ENCODE measurements at regions of chr4 and their contacts with region 1.

Region 1: DNA sequence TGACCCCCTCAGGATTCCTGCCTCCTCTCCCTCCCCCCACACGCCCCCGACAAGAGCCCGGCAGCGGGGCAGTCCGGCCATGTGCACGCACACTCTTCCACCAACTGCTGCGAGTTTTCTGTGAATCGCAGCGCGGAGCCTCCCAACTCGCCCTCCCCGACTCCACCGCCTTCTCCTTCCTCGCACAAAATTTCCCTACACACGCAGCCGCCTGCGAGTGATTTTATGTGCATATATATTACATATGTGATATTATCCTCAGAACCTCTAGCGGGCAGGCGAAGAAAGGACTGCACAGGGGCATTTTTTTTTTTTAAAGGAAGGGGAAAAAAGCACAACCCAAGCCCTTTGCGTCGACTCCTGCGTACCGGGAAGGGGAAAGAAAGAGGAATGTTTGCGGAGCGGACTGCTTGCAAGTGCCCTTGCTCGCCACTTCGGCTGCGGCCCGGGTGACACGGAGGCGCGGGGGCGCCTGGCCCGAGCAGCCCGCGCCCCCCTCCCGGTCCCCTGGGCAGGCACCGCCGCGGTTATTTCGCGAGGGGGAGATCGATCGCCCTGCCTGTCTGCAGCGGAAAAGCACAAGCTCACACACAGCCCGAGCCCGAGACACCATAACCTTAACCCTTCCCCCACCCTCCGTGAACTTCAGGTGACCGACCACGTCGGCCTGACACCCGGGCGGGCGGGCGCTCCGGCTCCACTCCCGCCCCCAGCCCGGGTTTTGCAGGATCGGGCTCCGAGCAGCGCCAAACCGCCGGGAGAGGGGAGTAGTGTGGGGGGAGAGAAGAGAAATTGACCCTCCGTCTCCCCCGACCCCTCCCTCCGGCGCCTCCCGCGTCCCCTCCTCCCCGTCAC is 2.3 kb downstream of the ZNF827 start:
- DNase-seq: peak; percentile 35 to 71 (median 66)
- ATAC-seq: peak; percentile 70
- H3K4me3 ChIP-seq: peak overlapping the region; percentile 77
- H3K4me3 Mint-ChIP-seq: peak overlapping the region; percentile 92 to 100 (median 95)
- H3K27ac ChIP-seq: peak overlapping the region; percentile 68
- H3K27ac Mint-ChIP-seq: peak overlapping the region; percentile 87 to 98 (median 93)
- H3K4me1 ChIP-seq: peaks cover 0 to 13% of the 10 kb centered on the region in 2 donors
- H3K4me1 Mint-ChIP-seq: peaks cover 26 to 49% (median 40%) of the 10 kb centered on the region in 7 donors
- H3K27me3 ChIP-seq: no peaks in the 10 kb centered on the region
- H3K27me3 Mint-ChIP-seq: peaks cover 0 to 8% (median 0%) of the 10 kb centered on the region in 5 donors

Region 2: DNA sequence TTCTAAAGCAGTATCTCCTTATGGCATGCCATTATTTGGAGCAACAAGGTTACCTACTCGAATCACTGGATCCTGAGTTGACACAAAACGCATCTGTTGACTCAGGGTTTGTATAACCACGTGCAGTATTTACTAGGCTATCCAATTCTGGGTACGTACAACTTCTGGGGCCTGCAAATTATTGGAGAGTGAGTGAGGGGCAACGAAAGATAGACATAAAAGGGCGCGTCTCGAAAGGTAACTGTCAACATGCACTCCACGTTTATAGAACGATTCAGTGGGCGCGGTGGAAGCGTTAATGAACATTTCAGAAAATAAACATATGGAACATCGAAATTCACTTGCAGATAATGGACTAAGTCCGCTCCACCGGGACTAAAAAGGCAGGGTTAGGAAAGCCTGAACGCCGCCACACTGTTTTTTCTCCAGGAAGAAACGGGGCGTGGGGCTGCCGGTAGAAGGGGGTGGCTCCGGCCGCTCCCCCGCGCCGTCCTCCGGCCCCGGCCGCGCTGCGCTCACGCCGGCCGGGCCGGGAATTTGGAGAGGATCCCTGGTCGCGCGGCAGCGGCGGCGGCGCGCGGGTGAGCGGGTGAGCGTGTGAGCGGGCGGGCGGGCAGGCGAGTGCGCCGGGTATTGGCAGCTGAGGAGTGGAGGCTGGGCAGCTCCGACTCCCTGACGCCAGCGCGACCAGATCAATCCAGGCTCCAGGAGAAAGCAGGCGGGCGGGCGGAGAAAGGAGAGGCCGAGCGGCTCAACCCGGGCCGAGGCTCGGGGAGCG is 455.0 kb before region 1 on chr4 and contains the start of gene SMAD1:
- CTCF ChIA-PET with region 1: no interaction called
- POLR2A ChIA-PET with region 1: no interaction called
- intact Hi-C with region 1: loop called in 1 of 2 experiments (anchors 5 kb)
- DNase-seq: peak in 7 of 9 donors; percentile 11 to 53 (median 18)
- ATAC-seq: peak; percentile 76
- H3K4me3 ChIP-seq: peak within 1 kb of the TSS; percentile 58
- H3K4me3 Mint-ChIP-seq: peak within 1 kb of the TSS in 7 of 10 donors; percentile 68 to 91 (median 87)
- H3K27ac ChIP-seq: no peak within 1 kb of the TSS
- H3K27ac Mint-ChIP-seq: peak within 1 kb of the TSS in 4 of 9 donors; percentile 6 to 71 (median 22)
- H3K4me1 ChIP-seq: peaks cover 0 to 4% of the 10 kb centered on the region in 2 donors
- H3K4me1 Mint-ChIP-seq: peaks cover 4 to 15% (median 10%) of the 10 kb centered on the region in 7 donors
- H3K27me3 ChIP-seq: peaks cover 0 to 4% of the 10 kb centered on the region in 2 donors
- H3K27me3 Mint-ChIP-seq: peaks cover 4 to 42% (median 31%) of the 10 kb centered on the region in 5 donors
- total RNA-seq, gene SMAD1: 0.29 to 13.5 (median 1.2) TPM

Region 3: GRCh38 chr4:145829629-145830395 is 106.6 kb before region 1 on chr4:
- CTCF ChIA-PET with region 1: no interaction called
- POLR2A ChIA-PET with region 1: no interaction called
- intact Hi-C with region 1: loop called in 1 of 2 experiments (anchors 5 kb)
- DNase-seq: peak in 1 of 9 donors; percentile 58
- ATAC-seq: no peak
- H3K4me3 ChIP-seq: peak overlapping the region; percentile 1
- H3K4me3 Mint-ChIP-seq: peak overlapping the region in 9 of 10 donors; percentile 43 to 83 (median 67)
- H3K27ac ChIP-seq: peak overlapping the region; percentile 40
- H3K27ac Mint-ChIP-seq: peak overlapping the region; percentile 25 to 92 (median 80)
- H3K4me1 ChIP-seq: peaks cover 8 to 9% of the 10 kb centered on the region in 2 donors
- H3K4me1 Mint-ChIP-seq: peaks cover 6 to 39% (median 31%) of the 10 kb centered on the region in 7 donors
- H3K27me3 ChIP-seq: no peaks in the 10 kb centered on the region
- H3K27me3 Mint-ChIP-seq: no peaks in the 10 kb centered on the region

Region 4: GRCh38 chr4:145920205-145920604 is 16.2 kb before region 1 on chr4:
- CTCF ChIA-PET with region 1: interaction called, 3 read pairs
- POLR2A ChIA-PET with region 1: interaction called, 4 read pairs
- intact Hi-C with region 1: loop called in 1 of 2 experiments (anchors 2 kb)
- DNase-seq: no peak
- ATAC-seq: no peak
- H3K4me3 ChIP-seq: no peak overlapping the region
- H3K4me3 Mint-ChIP-seq: no peak overlapping the region
- H3K27ac ChIP-seq: no peak overlapping the region
- H3K27ac Mint-ChIP-seq: no peak overlapping the region
- H3K4me1 ChIP-seq: no peaks in the 10 kb centered on the region
- H3K4me1 Mint-ChIP-seq: peaks cover 11 to 35% (median 28%) of the 10 kb centered on the region in 7 donors
- H3K27me3 ChIP-seq: no peaks in the 10 kb centered on the region
- H3K27me3 Mint-ChIP-seq: no peaks in the 10 kb centered on the region

Region 5: DNA sequence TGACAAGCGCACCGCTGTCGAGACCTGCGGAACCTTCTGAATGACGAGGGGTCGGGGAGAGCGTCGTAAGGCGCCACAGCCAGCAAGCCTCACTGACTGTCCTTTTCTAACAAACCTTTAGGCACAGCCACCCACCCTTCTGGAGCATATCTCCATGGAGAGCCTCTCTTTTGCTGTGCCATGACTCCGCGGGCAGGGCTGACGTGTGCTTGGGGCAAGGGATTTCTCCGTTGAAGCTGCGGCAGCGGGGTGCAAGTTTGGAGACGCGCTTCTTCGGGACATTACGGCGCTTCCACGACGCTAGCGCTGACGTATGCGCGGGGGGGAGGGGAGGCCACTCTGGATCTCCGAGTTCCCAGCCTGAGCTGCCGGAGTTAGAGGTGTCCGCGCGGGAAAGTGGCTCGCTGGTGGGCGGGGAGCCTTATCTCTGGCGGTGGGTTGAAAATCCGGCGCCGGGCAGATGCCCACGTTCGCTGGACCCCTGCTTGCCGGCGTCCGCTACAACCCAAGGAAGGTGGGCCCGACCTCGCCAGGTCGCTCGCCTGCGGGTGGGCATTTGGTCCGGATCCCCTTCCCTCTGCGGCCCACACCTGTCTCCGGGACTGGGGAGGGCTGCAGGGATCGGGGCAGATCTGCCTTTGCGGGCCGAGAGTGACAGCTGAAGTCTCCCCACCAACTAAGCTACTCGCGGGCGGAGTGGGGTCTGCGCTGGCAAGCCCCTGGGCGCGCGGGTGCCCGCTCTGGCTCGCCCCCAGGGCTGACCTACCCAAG is 585.9 kb after region 1 on chr4:
- CTCF ChIA-PET with region 1: no interaction called
- POLR2A ChIA-PET with region 1: no interaction called
- intact Hi-C with region 1: loop called (anchors 2 to 10 kb)
- DNase-seq: peak; percentile 63 to 83 (median 76)
- ATAC-seq: peak; percentile 93
- H3K4me3 ChIP-seq: peak overlapping the region; percentile 95
- H3K4me3 Mint-ChIP-seq: no peak overlapping the region
- H3K27ac ChIP-seq: peak overlapping the region; percentile 85
- H3K27ac Mint-ChIP-seq: peak overlapping the region in 2 of 9 donors; percentile 58 to 69
- H3K4me1 ChIP-seq: peaks cover 13 to 24% of the 10 kb centered on the region in 2 donors
- H3K4me1 Mint-ChIP-seq: peaks cover 17 to 37% (median 31%) of the 10 kb centered on the region in 7 donors
- H3K27me3 ChIP-seq: no peaks in the 10 kb centered on the region
- H3K27me3 Mint-ChIP-seq: peaks cover 0 to 7% (median 0%) of the 10 kb centered on the region in 5 donors

Measured in naive thymus-derived CD4-positive, alpha-beta T cell (primary cell).